Activated CD4-positive, alpha-beta T cell treated with anti-CD3 and anti-CD28 coated beads for 36 hours (primary cell): ENCODE measurements at regions of chr1 and their contacts with region 1.

Region 1: GRCh38 chr1:63367215-63368103 is at the start of gene ALG6:
- DNase-seq: peak; percentile 94
- ATAC-seq: peak; percentile 94
- H3K4me3 Mint-ChIP-seq: peak within 1 kb of the TSS; percentile 98
- H3K27ac Mint-ChIP-seq: peak within 1 kb of the TSS; percentile 82
- H3K4me1 Mint-ChIP-seq: peaks cover 23% of the 10 kb centered on the region
- H3K27me3 Mint-ChIP-seq: peaks cover 5% of the 10 kb centered on the region
- total RNA-seq, gene ALG6: 16.2 to 16.3 TPM

Region 2: DNA sequence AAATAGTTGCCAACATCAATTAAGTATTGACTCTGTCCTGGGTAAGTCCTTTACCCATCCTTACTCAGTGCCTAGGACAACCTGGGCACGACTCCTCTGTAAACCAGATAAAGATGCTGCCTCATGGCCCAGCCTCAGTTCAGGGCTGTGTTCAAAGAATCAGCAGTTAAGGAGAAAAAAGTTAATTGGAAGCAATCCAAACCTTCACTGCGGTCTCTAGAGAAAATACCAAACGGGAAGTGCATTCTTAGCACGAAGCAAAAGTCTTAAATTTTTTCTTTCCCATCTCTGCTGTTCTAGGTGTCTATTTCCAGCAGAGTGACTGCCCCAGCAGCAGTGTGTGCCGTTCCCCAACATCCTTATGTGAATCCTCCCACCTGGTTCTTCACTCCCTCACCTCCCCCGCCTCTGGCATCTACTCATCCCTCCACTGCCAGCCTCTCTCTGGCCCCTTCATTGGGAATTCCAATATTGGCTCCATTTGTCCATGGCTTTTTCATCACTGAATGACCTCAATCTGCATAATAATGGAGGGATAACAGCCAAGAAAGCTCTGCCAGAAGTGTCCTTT is 1071.5 kb before region 1 on chr1:
- CTCF ChIA-PET with region 1: no interaction called
- POLR2A ChIA-PET with region 1: no interaction called
- intact Hi-C with region 1: no loop called
- DNase-seq: no peak
- ATAC-seq: peak; percentile 33
- H3K4me3 Mint-ChIP-seq: no peak overlapping the region
- H3K27ac Mint-ChIP-seq: peak overlapping the region; percentile 58
- H3K4me1 Mint-ChIP-seq: peaks cover 12% of the 10 kb centered on the region
- H3K27me3 Mint-ChIP-seq: peaks cover 1% of the 10 kb centered on the region

Region 3: GRCh38 chr1:62783723-62784508 is 583.5 kb before region 1 on chr1 and contains the start of gene ATG4C:
- CTCF ChIA-PET with region 1: no interaction called
- POLR2A ChIA-PET with region 1: no interaction called
- intact Hi-C with region 1: loop called in 1 of 2 experiments (anchors 2 kb)
- DNase-seq: peak; percentile 96
- ATAC-seq: peak; percentile 99
- H3K4me3 Mint-ChIP-seq: no peak within 1 kb of the TSS
- H3K27ac Mint-ChIP-seq: no peak within 1 kb of the TSS
- H3K4me1 Mint-ChIP-seq: peaks cover 17% of the 10 kb centered on the region
- H3K27me3 Mint-ChIP-seq: peaks cover 10% of the 10 kb centered on the region
- total RNA-seq, gene ATG4C: 16.2 to 17.7 TPM

Region 4: GRCh38 chr1:63327417-63328139 is 39.9 kb before region 1 on chr1:
- CTCF ChIA-PET with region 1: interaction called, 5 read pairs
- POLR2A ChIA-PET with region 1: no interaction called
- intact Hi-C with region 1: loop called in 1 of 2 experiments (anchors 2 kb)
- DNase-seq: peak; percentile 79
- ATAC-seq: peak; percentile 61
- H3K4me3 Mint-ChIP-seq: peak overlapping the region; percentile 0
- H3K27ac Mint-ChIP-seq: no peak overlapping the region
- H3K4me1 Mint-ChIP-seq: peaks cover 24% of the 10 kb centered on the region
- H3K27me3 Mint-ChIP-seq: peaks cover 61% of the 10 kb centered on the region

Region 5: DNA sequence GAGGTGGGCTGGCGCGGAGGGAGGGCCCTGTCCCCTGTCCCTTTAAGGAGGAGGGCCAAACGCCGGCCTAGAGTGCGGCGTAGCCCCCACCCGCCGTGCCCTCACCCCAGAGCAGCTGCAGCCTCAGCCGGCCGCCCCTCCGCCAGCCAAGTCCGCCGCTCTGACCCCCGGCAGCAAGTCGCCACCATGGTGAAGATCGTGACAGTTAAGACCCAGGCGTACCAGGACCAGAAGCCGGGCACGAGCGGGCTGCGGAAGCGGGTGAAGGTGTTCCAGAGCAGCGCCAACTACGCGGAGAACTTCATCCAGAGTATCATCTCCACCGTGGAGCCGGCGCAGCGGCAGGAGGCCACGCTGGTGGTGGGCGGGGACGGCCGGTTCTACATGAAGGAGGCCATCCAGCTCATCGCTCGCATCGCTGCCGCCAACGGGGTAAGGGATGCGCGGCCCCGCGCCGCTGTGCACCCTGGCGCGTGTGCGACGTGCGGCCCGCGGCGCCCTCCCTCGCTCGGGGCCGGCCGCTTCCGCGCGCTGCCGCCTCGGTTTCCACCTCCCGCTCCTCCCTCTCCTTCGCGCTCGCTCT is 225.9 kb after region 1 on chr1 and contains the start of gene PGM1:
- CTCF ChIA-PET with region 1: no interaction called
- POLR2A ChIA-PET with region 1: no interaction called
- intact Hi-C with region 1: loop called in 1 of 2 experiments (anchors 1 kb)
- DNase-seq: peak; percentile 89
- ATAC-seq: peak; percentile 85
- H3K4me3 Mint-ChIP-seq: peak within 1 kb of the TSS; percentile 97
- H3K27ac Mint-ChIP-seq: peak within 1 kb of the TSS; percentile 96
- H3K4me1 Mint-ChIP-seq: peaks cover 27% of the 10 kb centered on the region
- H3K27me3 Mint-ChIP-seq: no peaks in the 10 kb centered on the region
- total RNA-seq, gene PGM1: 38.8 to 43.8 TPM

Region 6: GRCh38 chr1:64624218-64624713 is 1256.8 kb after region 1 on chr1:
- CTCF ChIA-PET with region 1: no interaction called
- POLR2A ChIA-PET with region 1: no interaction called
- intact Hi-C with region 1: no loop called
- DNase-seq: peak; percentile 19
- ATAC-seq: peak; percentile 60
- H3K4me3 Mint-ChIP-seq: no peak overlapping the region
- H3K27ac Mint-ChIP-seq: no peak overlapping the region
- H3K4me1 Mint-ChIP-seq: peaks cover 9% of the 10 kb centered on the region
- H3K27me3 Mint-ChIP-seq: no peaks in the 10 kb centered on the region